Caco-2 (cell line): ENCODE measurements at regions of chr10 and their contacts with region 1.

Region 1: DNA sequence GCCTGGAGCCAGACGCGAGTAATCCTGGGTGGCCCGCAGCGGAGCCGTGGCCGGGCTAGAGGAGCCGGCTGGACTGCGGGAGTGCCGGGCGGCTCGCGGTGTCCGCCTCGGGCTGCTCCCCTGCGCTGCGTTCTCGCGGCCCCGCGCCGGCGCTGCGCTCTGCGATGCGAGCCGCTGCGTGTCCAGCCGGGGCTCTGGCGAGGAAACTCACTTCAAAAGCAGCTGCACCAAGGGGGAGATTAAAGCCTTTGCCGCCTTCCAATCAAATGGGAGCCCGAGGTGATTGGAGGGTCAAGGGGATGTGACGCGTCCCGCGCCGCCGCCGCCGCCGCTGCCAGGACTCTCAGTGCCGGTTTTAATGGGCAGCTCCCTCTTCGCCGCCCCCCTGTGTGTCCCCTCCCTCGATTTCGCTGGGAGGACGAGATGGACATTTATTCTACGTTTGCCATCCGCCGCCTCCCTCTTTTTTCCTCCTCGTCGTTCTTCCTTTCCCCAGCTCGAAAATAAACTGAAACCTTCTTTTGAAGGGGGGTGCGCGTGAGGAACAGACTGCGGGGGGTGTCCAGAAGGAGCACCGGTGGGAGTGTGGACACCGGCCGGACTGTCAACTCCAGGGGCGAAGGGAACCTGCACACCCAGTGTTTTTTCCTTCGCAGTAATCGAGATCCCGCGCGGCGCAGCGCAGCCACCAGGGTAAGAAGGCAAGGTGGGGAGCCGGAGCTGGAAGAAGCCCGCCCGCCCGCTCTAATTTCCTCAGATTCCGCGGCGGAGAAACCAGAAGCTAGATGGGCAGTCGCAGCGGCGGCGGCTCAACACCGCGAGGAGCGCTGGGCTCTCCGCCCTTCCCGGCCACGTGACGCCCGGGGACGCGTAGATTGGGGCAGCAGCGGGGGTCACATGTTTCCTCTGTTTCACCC is at the start of gene ZNF503:
- DNase-seq: peak; percentile 98 to 99
- H3K4me3 ChIP-seq: peak within 1 kb of the TSS; percentile 99
- H3K4me3 Mint-ChIP-seq: peak within 1 kb of the TSS; percentile 94
- H3K27ac Mint-ChIP-seq: peak within 1 kb of the TSS; percentile 95
- H3K4me1 ChIP-seq: peaks cover 9% of the 10 kb centered on the region
- H3K4me1 Mint-ChIP-seq: peaks cover 7% of the 10 kb centered on the region
- H3K27me3 ChIP-seq: no peaks in the 10 kb centered on the region
- H3K27me3 Mint-ChIP-seq: no peaks in the 10 kb centered on the region
- CTCF ChIP-seq: no peak
- total RNA-seq, gene ZNF503: 35.5 and 35.7 TPM in 2 replicates

Region 2: GRCh38 chr10:75431180-75432111 is 29.6 kb after region 1 on chr10 and contains the start of gene LRMDA:
- CTCF ChIA-PET with region 1: interaction called, 8 read pairs
- POLR2A ChIA-PET with region 1: interaction called, 24 read pairs
- intact Hi-C with region 1: loop called (anchors 1 kb)
- DNase-seq: peak; percentile 71 to 77
- H3K4me3 ChIP-seq: peak within 1 kb of the TSS; percentile 80
- H3K4me3 Mint-ChIP-seq: peak within 1 kb of the TSS; percentile 72
- H3K27ac Mint-ChIP-seq: peak within 1 kb of the TSS; percentile 84
- H3K4me1 ChIP-seq: peaks cover 52% of the 10 kb centered on the region
- H3K4me1 Mint-ChIP-seq: peaks cover 44% of the 10 kb centered on the region
- H3K27me3 ChIP-seq: no peaks in the 10 kb centered on the region
- H3K27me3 Mint-ChIP-seq: no peaks in the 10 kb centered on the region
- CTCF ChIP-seq: no peak
- total RNA-seq, gene LRMDA: 18.5 and 21.6 TPM in 2 replicates

Region 3: GRCh38 chr10:75640803-75641202 is 239.0 kb after region 1 on chr10:
- CTCF ChIA-PET with region 1: no interaction called
- POLR2A ChIA-PET with region 1: interaction called, 12 read pairs
- intact Hi-C with region 1: no loop called
- DNase-seq: no peak
- H3K4me3 ChIP-seq: no peak overlapping the region
- H3K4me3 Mint-ChIP-seq: no peak overlapping the region
- H3K27ac Mint-ChIP-seq: no peak overlapping the region
- H3K4me1 ChIP-seq: no peaks in the 10 kb centered on the region
- H3K4me1 Mint-ChIP-seq: no peaks in the 10 kb centered on the region
- H3K27me3 ChIP-seq: no peaks in the 10 kb centered on the region
- H3K27me3 Mint-ChIP-seq: no peaks in the 10 kb centered on the region
- CTCF ChIP-seq: no peak

Region 4: GRCh38 chr10:75772153-75772887 is 370.5 kb after region 1 on chr10:
- CTCF ChIA-PET with region 1: no interaction called
- POLR2A ChIA-PET with region 1: interaction called, 4 read pairs
- intact Hi-C with region 1: loop called (anchors 10 kb)
- DNase-seq: no peak
- H3K4me3 ChIP-seq: no peak overlapping the region
- H3K4me3 Mint-ChIP-seq: no peak overlapping the region
- H3K27ac Mint-ChIP-seq: no peak overlapping the region
- H3K4me1 ChIP-seq: peaks cover 21% of the 10 kb centered on the region; the same call in 1 of the 2 replicates
- H3K4me1 Mint-ChIP-seq: peaks cover 25% of the 10 kb centered on the region
- H3K27me3 ChIP-seq: no peaks in the 10 kb centered on the region
- H3K27me3 Mint-ChIP-seq: no peaks in the 10 kb centered on the region
- CTCF ChIP-seq: no peak

Region 5: GRCh38 chr10:76051007-76051936 is 649.4 kb after region 1 on chr10:
- CTCF ChIA-PET with region 1: interaction called, 6 read pairs
- POLR2A ChIA-PET with region 1: interaction called, 8 read pairs
- intact Hi-C with region 1: loop called (anchors 1 kb)
- DNase-seq: peak; percentile 95 to 97
- H3K4me3 ChIP-seq: no peak overlapping the region
- H3K4me3 Mint-ChIP-seq: peak overlapping the region; percentile 56
- H3K27ac Mint-ChIP-seq: peak overlapping the region; percentile 93
- H3K4me1 ChIP-seq: peaks cover 39% of the 10 kb centered on the region
- H3K4me1 Mint-ChIP-seq: peaks cover 36% of the 10 kb centered on the region
- H3K27me3 ChIP-seq: no peaks in the 10 kb centered on the region
- H3K27me3 Mint-ChIP-seq: no peaks in the 10 kb centered on the region
- CTCF ChIP-seq: peak in 1 of 2 experiments; percentile 17

Region 6: GRCh38 chr10:76190634-76191270 is 788.9 kb after region 1 on chr10:
- CTCF ChIA-PET with region 1: no interaction called
- POLR2A ChIA-PET with region 1: no interaction called
- intact Hi-C with region 1: loop called (anchors 2 kb)
- DNase-seq: peak; percentile 72 to 78
- H3K4me3 ChIP-seq: no peak overlapping the region
- H3K4me3 Mint-ChIP-seq: peak overlapping the region; percentile 53
- H3K27ac Mint-ChIP-seq: peak overlapping the region; percentile 92
- H3K4me1 ChIP-seq: peaks cover 47% of the 10 kb centered on the region
- H3K4me1 Mint-ChIP-seq: peaks cover 26% of the 10 kb centered on the region
- H3K27me3 ChIP-seq: no peaks in the 10 kb centered on the region
- H3K27me3 Mint-ChIP-seq: no peaks in the 10 kb centered on the region
- CTCF ChIP-seq: no peak